Mammary epithelial cell (primary cell): ENCODE measurements at regions of chr13 and their contacts with region 1.

Region 1: GRCh38 chr13:53151336-53152056 is 122.9 kb downstream of the OLFM4 start:
- DNase-seq: no peak
- H3K4me3 ChIP-seq: no peak overlapping the region
- H3K27ac ChIP-seq: no peak overlapping the region
- H3K4me1 ChIP-seq: no peaks in the 10 kb centered on the region
- H3K27me3 ChIP-seq: no peaks in the 10 kb centered on the region
- CTCF ChIP-seq: peak; percentile 68 to 77

Region 2: GRCh38 chr13:52862358-52863206 is 288.9 kb before region 1 on chr13:
- CTCF ChIA-PET with region 1: no interaction called
- dilution Hi-C with region 1: no loop called
- in situ Hi-C with region 1: no loop called
- intact Hi-C with region 1: loop called (anchors 10 kb)
- DNase-seq: no peak
- H3K4me3 ChIP-seq: no peak overlapping the region
- H3K27ac ChIP-seq: no peak overlapping the region
- H3K4me1 ChIP-seq: no peaks in the 10 kb centered on the region
- H3K27me3 ChIP-seq: no peaks in the 10 kb centered on the region
- CTCF ChIP-seq: peak; percentile 72 to 78

Region 3: DNA sequence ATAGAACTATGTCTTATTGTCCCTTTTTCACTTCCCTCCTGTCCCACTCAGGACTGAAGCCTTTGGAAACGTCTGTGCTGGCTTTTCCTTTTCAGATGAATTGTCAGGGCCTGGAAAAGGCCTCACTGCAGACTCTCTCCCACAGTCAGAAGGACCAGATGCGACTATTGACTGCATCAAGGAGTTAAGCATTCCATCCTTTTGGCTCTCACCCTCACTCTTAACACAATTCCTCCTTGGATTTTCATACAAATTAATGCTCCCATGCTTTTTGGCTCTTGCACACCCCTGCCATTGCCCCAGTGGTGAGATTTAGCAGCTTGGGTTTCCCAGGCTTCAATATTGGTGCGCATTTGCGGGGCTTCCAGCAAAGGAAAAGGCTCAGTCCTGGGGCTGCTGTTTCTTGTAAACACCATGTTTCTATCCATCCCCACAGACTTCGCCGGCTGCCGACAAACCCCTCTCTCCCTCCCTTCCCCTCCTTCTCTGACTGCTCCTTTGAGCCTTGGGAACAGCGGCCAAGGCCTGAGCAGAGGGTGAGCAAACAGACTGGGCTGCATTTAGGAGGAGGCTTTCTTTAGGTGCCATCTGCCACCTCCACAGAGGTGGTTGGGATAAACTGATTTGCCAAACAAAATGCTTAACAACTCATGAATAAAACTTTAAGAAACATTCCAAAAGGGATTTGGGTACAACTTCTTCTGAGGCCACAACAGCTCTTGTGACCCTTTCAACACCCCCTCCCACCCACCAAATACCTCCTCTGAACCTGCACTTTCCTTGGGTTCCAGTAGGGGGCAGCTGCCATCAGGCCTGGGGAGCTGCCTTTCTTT is 254.5 kb before region 1 on chr13:
- CTCF ChIA-PET with region 1: no interaction called
- dilution Hi-C with region 1: no loop called
- in situ Hi-C with region 1: no loop called
- intact Hi-C with region 1: loop called (anchors 10 kb)
- DNase-seq: no peak
- H3K4me3 ChIP-seq: no peak overlapping the region
- H3K27ac ChIP-seq: no peak overlapping the region
- H3K4me1 ChIP-seq: no peaks in the 10 kb centered on the region
- H3K27me3 ChIP-seq: no peaks in the 10 kb centered on the region
- CTCF ChIP-seq: peak; percentile 64 to 71